ENCODE measurements at regions of chr4 and their contacts with region 1.

Region 1: DNA sequence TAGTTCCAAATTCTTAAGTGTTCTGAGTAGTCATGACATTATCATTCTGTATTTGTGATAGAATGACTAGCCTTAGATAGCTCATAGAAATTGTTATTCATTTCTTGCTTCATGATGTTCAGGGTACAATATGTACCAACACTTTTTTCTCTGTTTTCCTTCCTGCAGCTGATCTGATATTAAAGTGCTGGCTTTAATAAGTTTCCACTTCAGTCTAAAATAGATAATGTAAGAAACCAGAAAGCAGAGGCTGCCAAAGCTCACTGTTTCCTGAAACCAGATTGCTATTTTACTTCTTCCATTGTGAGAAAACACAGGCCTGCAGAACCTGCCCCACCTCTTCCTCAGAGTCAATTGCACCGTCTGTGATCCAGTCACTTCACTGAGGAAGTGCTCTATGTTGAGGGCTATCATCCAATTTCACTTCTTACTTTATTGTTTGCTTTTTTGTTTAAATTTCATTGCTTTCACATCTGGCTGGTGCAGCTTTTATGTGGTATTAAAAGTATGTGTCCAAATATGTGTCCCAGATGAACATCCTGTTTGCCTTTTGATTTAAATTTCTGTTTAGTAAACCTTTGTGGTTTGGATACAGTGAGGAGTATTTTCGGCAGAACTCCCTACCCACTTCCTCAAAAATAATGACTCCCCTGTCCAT is 652.1 kb downstream of the ANKRD50 start:
- DNase-seq: peak; percentile 48 to 59
- ATAC-seq: peak; percentile 93
- H3K4me3 ChIP-seq: peak overlapping the region in 1 of 4 donors; percentile 3
- H3K27ac ChIP-seq: peak overlapping the region; percentile 64 to 78 (median 71)
- H3K4me1 ChIP-seq: peaks cover 3 to 19% of the 10 kb centered on the region in 2 donors
- H3K27me3 ChIP-seq: no peaks in the 10 kb centered on the region
- CTCF ChIP-seq: no peak
- POLR2A ChIP-seq: no peak

Region 2: DNA sequence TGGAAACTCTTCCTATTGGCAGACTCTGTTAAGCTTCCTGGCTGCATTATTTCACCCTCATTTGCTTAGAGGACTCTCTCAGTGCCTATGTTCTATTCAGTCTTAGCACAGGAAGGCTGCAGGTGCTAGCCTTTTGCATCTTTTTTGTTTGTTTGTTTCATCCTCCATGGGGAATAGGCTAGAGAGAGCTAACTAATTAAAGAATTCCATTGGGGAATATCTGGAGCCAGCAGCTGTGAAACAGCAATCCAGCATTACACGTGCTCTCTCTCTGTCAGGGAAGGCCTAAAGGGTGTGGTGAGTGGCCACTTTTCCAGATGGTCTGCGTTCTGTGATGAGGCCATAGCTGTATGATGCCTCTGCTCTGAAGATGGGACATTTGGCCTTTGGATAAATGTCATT is 30.2 kb before region 1 on chr4:
- in situ Hi-C with region 1: no loop called
- intact Hi-C with region 1: loop called (anchors 1 kb)
- DNase-seq: peak; percentile 35 to 58
- ATAC-seq: peak; percentile 81 to 89
- H3K4me3 ChIP-seq: no peak overlapping the region
- H3K27ac ChIP-seq: peak overlapping the region; percentile 46 to 65 (median 56)
- H3K4me1 ChIP-seq: peaks cover 14 to 18% of the 10 kb centered on the region in 2 donors
- H3K27me3 ChIP-seq: no peaks in the 10 kb centered on the region
- CTCF ChIP-seq: no peak
- POLR2A ChIP-seq: no peak

Region 3: GRCh38 chr4:124092541-124092984 is 32.2 kb after region 1 on chr4:
- in situ Hi-C with region 1: no loop called
- intact Hi-C with region 1: loop called (anchors 2 kb)
- DNase-seq: no peak
- ATAC-seq: peak; percentile 29 to 30
- H3K4me3 ChIP-seq: no peak overlapping the region
- H3K27ac ChIP-seq: peak overlapping the region in 3 of 4 donors; percentile 4 to 44 (median 16)
- H3K4me1 ChIP-seq: no peaks in the 10 kb centered on the region
- H3K27me3 ChIP-seq: no peaks in the 10 kb centered on the region
- CTCF ChIP-seq: no peak
- POLR2A ChIP-seq: no peak